Activated CD4-positive, alpha-beta T cell treated with anti-CD3 and anti-CD28 coated beads for 36 hours (primary cell): ENCODE measurements at regions of chr12 and their contacts with region 1.

Region 1: GRCh38 chr12:21476949-21477348 is 24.5 kb downstream of the RECQL start:
- DNase-seq: no peak
- ATAC-seq: peak; percentile 92
- H3K4me3 Mint-ChIP-seq: no peak overlapping the region
- H3K27ac Mint-ChIP-seq: peak overlapping the region; percentile 49
- H3K4me1 Mint-ChIP-seq: peaks cover 15% of the 10 kb centered on the region
- H3K27me3 Mint-ChIP-seq: no peaks in the 10 kb centered on the region

Region 2: DNA sequence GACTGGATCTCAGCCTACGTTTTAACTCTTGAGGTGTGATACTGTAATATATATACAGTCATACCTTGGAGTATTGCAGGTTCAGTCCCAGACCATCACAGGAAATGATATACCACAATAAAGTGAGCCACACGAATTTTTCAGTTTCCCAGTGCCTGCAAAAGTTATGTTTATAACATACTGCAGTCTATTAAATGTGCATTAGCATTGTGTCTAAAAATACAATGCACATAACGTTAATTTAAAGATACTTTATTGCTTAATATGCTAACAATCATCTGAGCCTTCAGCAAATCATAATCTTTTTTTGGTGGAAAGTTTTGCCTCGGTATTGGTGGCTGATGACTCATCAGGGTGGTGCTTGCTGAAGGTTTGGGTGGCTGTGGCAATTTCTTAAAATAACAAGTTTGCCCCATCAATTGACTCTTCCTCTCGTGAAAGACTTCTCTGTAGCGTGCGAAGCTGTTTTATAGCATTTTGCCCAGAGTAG is 20.6 kb before region 1 on chr12:
- CTCF ChIA-PET with region 1: interaction called, 3 read pairs
- POLR2A ChIA-PET with region 1: no interaction called
- intact Hi-C with region 1: loop called in 1 of 2 experiments (anchors 2 kb)
- DNase-seq: peak; percentile 59
- ATAC-seq: peak; percentile 84
- H3K4me3 Mint-ChIP-seq: no peak overlapping the region
- H3K27ac Mint-ChIP-seq: peak overlapping the region; percentile 74
- H3K4me1 Mint-ChIP-seq: peaks cover 42% of the 10 kb centered on the region
- H3K27me3 Mint-ChIP-seq: no peaks in the 10 kb centered on the region